ENCODE measurements at regions of chr14 and their contacts with region 1.

Region 1: DNA sequence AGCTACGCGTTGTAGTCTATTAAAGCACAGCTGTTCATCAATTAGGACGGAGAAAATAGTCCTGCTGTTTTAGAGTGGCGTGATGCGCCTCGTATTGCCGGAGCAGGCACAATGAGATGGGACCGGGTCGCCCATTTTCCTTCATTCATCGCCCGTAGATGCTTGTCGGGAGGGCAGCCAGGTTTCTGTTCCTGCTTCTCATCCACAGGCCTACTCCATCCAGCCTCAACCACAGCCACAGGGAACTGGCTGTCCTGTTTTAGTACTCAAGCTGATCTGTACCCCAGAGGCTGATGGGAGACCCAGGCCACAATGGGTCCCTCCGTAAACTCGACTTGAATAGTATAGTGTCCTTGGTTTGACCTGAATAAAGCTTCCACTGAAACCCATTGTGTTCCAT is 264.0 kb downstream of the VRK1 start:
- DNase-seq: no peak
- H3K4me3 ChIP-seq: no peak overlapping the region
- H3K27ac ChIP-seq: peak overlapping the region; percentile 22
- H3K4me1 ChIP-seq: peaks cover 42% of the 10 kb centered on the region
- H3K27me3 ChIP-seq: no peaks in the 10 kb centered on the region
- CTCF ChIP-seq: no peak

Region 2: GRCh38 chr14:96567289-96567899 is 493.8 kb before region 1 on chr14:
- CTCF ChIA-PET with region 1: no interaction called
- POLR2A ChIA-PET with region 1: no interaction called
- intact Hi-C with region 1: loop called (anchors 2 kb)
- DNase-seq: peak; percentile 80
- H3K4me3 ChIP-seq: no peak overlapping the region
- H3K27ac ChIP-seq: peak overlapping the region; percentile 51
- H3K4me1 ChIP-seq: peaks cover 53% of the 10 kb centered on the region
- H3K27me3 ChIP-seq: no peaks in the 10 kb centered on the region
- CTCF ChIP-seq: peak; percentile 74

Region 3: DNA sequence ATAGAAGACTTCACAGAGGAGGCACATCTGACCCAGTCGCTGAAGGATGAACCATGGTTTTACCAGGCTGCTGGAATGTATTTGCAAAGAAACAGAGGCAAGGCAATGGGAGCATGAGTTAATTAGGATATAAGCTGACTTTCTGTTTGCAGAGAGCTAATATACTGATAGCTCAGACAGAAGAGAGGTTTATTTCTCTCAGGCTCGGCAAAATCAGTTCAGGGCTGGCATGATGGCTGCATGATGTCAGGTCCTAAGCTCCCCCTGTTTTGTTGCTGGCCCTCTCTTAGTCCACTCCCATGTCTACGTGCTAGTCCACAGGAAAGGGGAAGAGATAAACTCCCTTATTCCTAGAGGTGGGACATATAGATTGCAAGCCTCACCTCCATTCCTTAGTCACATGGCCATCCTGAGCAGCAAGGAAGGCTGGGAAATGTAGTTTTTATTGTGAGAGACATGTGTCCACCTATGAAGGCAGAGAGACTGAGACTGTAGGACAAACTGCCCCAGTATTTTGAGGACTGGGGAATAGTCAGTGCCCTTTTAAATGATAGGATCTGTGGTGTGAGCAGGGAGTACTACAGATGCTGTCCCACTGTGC is 39.5 kb before region 1 on chr14:
- CTCF ChIA-PET with region 1: no interaction called
- POLR2A ChIA-PET with region 1: no interaction called
- intact Hi-C with region 1: no loop called
- DNase-seq: peak; percentile 28
- H3K4me3 ChIP-seq: no peak overlapping the region
- H3K27ac ChIP-seq: no peak overlapping the region
- H3K4me1 ChIP-seq: no peaks in the 10 kb centered on the region
- H3K27me3 ChIP-seq: no peaks in the 10 kb centered on the region
- CTCF ChIP-seq: no peak

Region 4: DNA sequence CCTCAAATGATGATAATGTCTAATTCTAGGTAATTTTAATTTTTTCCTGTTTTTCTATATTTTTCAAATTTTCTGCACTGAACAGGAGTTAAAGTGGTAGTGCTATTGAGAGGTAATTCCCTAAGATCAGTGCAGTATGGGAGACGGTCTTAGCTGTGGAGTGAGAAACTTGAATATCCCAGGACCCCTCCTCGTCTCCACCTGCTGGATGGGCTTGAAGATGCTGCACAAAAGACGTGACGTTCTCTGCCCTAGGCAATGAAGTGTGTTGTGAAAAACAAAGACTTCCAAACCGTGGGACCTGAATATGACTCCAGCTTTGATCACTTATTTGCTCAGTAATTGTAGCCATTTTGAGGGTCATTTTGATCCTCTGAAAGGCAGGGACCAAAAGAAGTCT is 34.1 kb after region 1 on chr14:
- CTCF ChIA-PET with region 1: no interaction called
- POLR2A ChIA-PET with region 1: no interaction called
- intact Hi-C with region 1: no loop called
- DNase-seq: no peak
- H3K4me3 ChIP-seq: no peak overlapping the region
- H3K27ac ChIP-seq: no peak overlapping the region
- H3K4me1 ChIP-seq: peaks cover 11% of the 10 kb centered on the region
- H3K27me3 ChIP-seq: no peaks in the 10 kb centered on the region
- CTCF ChIP-seq: 0 out of 2 replicates have a peak, but pooled peaks have one; percentile 17

Region 5: GRCh38 chr14:97233319-97233985 is 172.3 kb after region 1 on chr14:
- CTCF ChIA-PET with region 1: no interaction called
- POLR2A ChIA-PET with region 1: interaction called, 5 read pairs
- intact Hi-C with region 1: loop called (anchors 1 kb)
- DNase-seq: peak; percentile 63
- H3K4me3 ChIP-seq: no peak overlapping the region
- H3K27ac ChIP-seq: peak overlapping the region; percentile 93
- H3K4me1 ChIP-seq: peaks cover 58% of the 10 kb centered on the region
- H3K27me3 ChIP-seq: no peaks in the 10 kb centered on the region
- CTCF ChIP-seq: no peak

Region 6: DNA sequence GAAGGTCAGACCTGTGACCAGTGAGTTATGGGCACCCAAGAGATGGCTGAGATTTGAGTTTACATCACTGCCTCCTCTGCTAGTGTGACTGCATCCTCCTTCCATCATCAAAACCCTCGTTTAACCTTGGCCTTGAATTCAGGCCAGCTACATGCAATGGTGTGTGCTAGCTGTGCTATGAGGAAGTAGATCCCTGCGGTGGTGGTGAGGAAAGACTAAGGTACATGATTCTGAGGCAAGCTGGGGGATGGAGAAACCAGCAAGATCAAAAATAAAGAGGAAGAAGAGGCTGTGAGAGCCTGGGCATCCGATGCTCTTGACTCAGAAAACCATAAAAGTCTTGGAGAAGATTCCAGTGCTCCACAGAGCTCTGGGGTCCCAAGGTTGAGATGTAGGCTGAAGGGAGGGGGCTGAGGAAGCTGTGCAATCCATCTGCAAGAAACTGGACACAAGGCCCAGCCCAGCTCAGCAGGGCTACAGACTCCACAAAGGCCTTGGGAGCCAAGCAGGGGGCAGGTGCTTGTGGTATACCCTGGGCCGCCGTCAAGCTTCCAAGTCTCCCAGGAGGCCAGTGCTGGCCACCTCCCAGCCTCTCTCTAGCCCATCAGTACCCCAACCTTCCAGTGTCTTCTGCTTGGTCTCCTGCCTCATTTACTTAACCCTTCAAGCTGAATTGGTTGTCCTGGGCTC is 510.8 kb after region 1 on chr14:
- CTCF ChIA-PET with region 1: no interaction called
- POLR2A ChIA-PET with region 1: no interaction called
- intact Hi-C with region 1: no loop called
- DNase-seq: no peak
- H3K4me3 ChIP-seq: no peak overlapping the region
- H3K27ac ChIP-seq: no peak overlapping the region
- H3K4me1 ChIP-seq: no peaks in the 10 kb centered on the region
- H3K27me3 ChIP-seq: no peaks in the 10 kb centered on the region
- CTCF ChIP-seq: no peak

Region 7: DNA sequence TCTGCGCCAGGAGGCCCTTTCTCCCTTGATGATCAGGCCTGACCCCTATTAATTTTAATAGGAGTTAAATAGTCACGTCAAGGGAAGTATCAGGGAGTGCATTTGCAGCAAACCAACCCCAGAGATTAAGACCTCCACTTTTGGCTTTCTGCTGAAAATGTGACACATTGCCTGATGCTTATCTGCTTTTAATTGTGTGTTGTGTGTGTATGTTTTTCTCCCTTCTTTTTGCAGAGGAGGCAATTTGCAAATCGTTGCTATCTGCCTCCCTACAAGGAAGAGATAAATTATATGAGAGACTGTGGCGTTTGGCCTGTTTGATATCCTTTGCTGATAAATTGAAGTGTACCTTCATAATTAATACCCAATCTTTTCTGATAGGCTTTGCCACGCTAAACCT is 558.9 kb after region 1 on chr14:
- CTCF ChIA-PET with region 1: no interaction called
- POLR2A ChIA-PET with region 1: no interaction called
- intact Hi-C with region 1: no loop called
- DNase-seq: no peak
- H3K4me3 ChIP-seq: no peak overlapping the region
- H3K27ac ChIP-seq: no peak overlapping the region
- H3K4me1 ChIP-seq: peaks cover 12% of the 10 kb centered on the region
- H3K27me3 ChIP-seq: no peaks in the 10 kb centered on the region
- CTCF ChIP-seq: no peak

Region 8: DNA sequence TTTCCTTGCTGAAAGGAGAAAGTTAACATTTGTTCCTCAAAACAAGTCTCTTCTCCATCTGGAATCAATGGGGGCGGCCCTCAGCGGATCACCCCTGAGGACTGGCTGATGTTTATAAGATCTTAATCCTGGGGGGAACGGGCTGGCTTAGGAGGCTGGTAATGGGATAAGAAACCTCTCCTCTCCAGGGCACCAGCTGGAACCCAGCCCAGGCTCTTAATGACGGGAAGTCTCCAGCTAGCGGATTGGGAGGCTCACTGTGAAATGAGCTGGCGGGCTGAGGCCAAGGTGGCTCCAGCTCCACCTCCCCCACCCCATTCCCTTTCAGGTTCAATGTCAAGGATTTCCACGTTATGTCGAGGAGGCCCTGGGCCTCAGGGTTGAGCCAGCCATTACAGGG is 869.0 kb after region 1 on chr14:
- CTCF ChIA-PET with region 1: no interaction called
- POLR2A ChIA-PET with region 1: no interaction called
- intact Hi-C with region 1: loop called (anchors 5 kb)
- DNase-seq: peak; percentile 96
- H3K4me3 ChIP-seq: no peak overlapping the region
- H3K27ac ChIP-seq: peak overlapping the region; percentile 51
- H3K4me1 ChIP-seq: peaks cover 20% of the 10 kb centered on the region
- H3K27me3 ChIP-seq: no peaks in the 10 kb centered on the region
- CTCF ChIP-seq: no peak